ENCODE measurements at regions of chr6 and their contacts with region 1.

Region 1: DNA sequence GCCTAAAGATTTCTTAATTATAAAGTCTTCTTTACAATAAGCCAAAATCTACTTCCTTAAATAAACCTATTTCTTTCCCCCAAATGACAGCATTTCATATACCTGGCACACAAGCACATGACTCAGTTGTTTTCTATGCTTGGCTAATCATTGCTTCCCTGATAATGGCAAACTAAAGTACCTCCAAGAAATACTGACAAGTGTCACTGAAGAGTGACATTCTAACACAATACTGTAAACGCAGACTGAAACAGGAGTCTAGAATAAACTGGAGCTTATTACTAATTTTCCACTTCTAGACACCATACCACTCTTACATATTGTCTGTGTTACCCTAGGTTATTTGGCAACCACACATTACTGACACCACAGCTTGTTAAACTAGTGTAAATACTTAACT is 14.3 kb downstream of the SYNCRIP start:
- DNase-seq: no peak
- ATAC-seq: peak; percentile 44
- H3K4me3 Mint-ChIP-seq: no peak overlapping the region
- H3K27ac Mint-ChIP-seq: peak overlapping the region; percentile 57
- H3K4me1 Mint-ChIP-seq: peaks cover 58% of the 10 kb centered on the region
- H3K27me3 Mint-ChIP-seq: no peaks in the 10 kb centered on the region

Region 2: GRCh38 chr6:85612690-85613474 is 15.5 kb before region 1 on chr6:
- CTCF ChIA-PET with region 1: interaction called, 3 read pairs
- POLR2A ChIA-PET with region 1: no interaction called
- intact Hi-C with region 1: loop called (anchors 1 to 2 kb)
- DNase-seq: no peak
- ATAC-seq: no peak
- H3K4me3 Mint-ChIP-seq: no peak overlapping the region
- H3K27ac Mint-ChIP-seq: no peak overlapping the region
- H3K4me1 Mint-ChIP-seq: peaks cover 8% of the 10 kb centered on the region
- H3K27me3 Mint-ChIP-seq: no peaks in the 10 kb centered on the region